ENCODE measurements at regions of chr3 and their contacts with region 1.

Region 1: DNA sequence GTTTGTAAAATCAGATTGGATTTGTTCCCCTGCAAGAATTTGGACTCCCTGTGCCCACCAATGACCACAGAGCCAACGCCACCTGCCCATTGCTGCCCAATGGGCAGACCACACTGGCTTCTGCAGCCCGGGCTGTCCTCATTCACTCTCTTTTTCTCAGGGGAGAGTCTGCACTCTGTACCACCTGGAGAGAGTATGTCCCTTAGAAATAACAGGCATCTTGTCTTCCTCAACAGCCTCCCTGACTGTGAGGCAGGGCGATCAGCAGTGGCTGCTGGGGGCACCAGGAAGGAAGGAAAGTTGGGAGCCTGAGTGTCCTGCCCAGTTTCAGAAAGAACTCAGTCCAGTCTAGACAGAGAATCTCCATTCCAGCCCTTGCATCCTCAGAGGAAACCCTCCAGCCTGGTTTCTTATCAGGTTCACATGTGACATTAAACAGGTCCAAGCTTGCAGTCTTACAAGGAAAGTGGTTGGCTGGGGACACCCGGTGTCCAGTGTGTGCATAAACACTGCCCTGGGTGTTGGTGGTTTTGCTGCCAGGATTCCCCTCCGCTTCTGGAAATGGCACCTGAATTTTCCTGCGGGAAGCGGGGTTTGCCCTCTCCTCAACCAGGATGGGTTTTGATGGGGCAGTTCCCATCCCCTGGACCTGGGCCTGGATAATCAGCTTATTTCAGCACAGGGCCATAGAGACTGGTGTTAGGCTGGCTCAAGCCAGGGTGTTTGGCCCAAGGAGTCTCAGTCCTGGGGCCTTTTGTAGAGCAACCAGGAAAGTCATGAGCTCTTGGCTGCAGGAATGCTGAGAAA is 37.2 kb downstream of the SSUH2 start:
- DNase-seq: peak; percentile 67 to 88
- H3K4me3 ChIP-seq: no peak overlapping the region
- H3K27ac ChIP-seq: no peak overlapping the region
- H3K4me1 ChIP-seq: peaks cover 7 to 21% (median 11%) of the 10 kb centered on the region in 4 donors
- H3K27me3 ChIP-seq: no peaks in the 10 kb centered on the region
- CTCF ChIP-seq: peak in 5 of 7 experiments; percentile 36 to 84 (median 63)
- EP300 ChIP-seq: no peak
- POLR2A ChIP-seq: no peak

Region 2: GRCh38 chr3:8436718-8437184 is 170.7 kb before region 1 on chr3:
- intact Hi-C with region 1: loop called (anchors 10 kb)
- DNase-seq: no peak
- H3K4me3 ChIP-seq: no peak overlapping the region
- H3K27ac ChIP-seq: no peak overlapping the region
- H3K4me1 ChIP-seq: peaks cover 0 to under 1% (median under 1%) of the 10 kb centered on the region in 4 donors
- H3K27me3 ChIP-seq: no peaks in the 10 kb centered on the region
- CTCF ChIP-seq: no peak
- EP300 ChIP-seq: no peak
- POLR2A ChIP-seq: no peak

Region 3: GRCh38 chr3:8702560-8702959 is 95.1 kb after region 1 on chr3:
- intact Hi-C with region 1: no loop called
- DNase-seq: no peak
- H3K4me3 ChIP-seq: no peak overlapping the region
- H3K27ac ChIP-seq: no peak overlapping the region
- H3K4me1 ChIP-seq: no peaks in the 10 kb centered on the region
- H3K27me3 ChIP-seq: no peaks in the 10 kb centered on the region
- CTCF ChIP-seq: no peak
- EP300 ChIP-seq: no peak
- POLR2A ChIP-seq: no peak

Measured in stomach (tissue), 19 donors.